Activated B cell treated with CpG ODN at 0.5 μM for 24 hours (primary cell): ENCODE measurements at regions of chr1 and their contacts with region 1.

Region 1: DNA sequence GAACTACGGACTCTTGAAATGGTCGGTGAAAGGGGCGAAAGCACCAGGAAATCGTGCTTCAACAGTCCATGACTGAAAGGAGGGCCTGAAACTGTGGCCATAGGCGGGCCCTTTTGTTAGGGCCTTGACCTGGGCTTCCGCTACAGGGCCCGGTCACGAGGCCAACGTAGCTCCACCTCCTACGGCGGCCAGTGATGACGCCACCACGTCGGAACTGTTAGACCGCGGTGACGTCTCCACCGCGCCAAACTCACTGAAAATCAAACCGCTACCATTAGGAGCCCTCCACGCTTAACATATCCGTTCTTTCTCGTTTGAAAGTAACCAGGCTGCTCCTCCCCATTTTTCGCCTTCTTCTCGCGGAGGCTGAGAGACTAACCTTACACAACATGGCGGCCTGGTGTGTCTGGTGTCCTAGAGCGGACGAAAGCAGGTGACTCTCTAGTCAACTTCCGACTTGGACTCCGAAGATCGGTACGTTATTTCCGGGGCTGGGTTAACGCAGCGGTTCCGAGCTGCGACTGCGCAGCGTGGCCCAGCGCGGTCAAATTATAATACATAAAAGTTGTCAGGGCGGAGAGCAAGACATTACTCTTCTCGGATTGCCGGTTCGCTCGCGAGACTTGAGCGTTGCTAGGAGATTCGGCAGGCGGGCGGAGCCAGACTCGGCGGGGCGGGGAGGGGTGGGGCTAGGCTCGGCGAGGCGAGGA is 376 bp upstream of the CACYBP start:
- DNase-seq: peak; percentile 88
- ATAC-seq: peak; percentile 78
- H3K4me3 Mint-ChIP-seq: no peak overlapping the region
- H3K27ac Mint-ChIP-seq: no peak overlapping the region
- H3K4me1 Mint-ChIP-seq: peaks cover 38% of the 10 kb centered on the region
- H3K27me3 Mint-ChIP-seq: no peaks in the 10 kb centered on the region
- CTCF ChIP-seq: no peak

Region 2: DNA sequence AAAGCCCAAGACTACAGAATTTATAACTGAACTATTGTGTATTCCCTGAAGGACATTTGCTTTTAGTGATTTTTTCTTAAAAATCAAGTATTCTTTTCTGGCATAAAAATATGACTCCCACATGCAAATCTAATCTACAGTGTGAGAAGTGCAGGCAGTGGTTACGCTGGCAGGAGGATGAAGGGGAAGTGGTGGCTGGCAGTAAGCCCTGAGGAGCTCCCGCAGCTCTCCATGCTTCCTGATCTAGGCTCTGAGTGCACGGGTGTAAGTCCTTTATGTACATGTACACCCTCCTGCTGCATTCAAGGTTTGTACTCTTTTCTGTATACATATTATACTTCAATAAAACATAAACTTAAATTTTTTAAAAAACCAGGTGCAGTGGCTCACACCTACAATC is 1589.8 kb before region 1 on chr1:
- CTCF ChIA-PET with region 1: no interaction called
- POLR2A ChIA-PET with region 1: interaction called, 3 read pairs
- intact Hi-C with region 1: loop called (anchors 10 kb)
- DNase-seq: no peak
- ATAC-seq: peak; percentile 25
- H3K4me3 Mint-ChIP-seq: peak overlapping the region; percentile 81
- H3K27ac Mint-ChIP-seq: peak overlapping the region; percentile 95
- H3K4me1 Mint-ChIP-seq: peaks cover 91% of the 10 kb centered on the region
- H3K27me3 Mint-ChIP-seq: no peaks in the 10 kb centered on the region
- CTCF ChIP-seq: no peak

Region 3: DNA sequence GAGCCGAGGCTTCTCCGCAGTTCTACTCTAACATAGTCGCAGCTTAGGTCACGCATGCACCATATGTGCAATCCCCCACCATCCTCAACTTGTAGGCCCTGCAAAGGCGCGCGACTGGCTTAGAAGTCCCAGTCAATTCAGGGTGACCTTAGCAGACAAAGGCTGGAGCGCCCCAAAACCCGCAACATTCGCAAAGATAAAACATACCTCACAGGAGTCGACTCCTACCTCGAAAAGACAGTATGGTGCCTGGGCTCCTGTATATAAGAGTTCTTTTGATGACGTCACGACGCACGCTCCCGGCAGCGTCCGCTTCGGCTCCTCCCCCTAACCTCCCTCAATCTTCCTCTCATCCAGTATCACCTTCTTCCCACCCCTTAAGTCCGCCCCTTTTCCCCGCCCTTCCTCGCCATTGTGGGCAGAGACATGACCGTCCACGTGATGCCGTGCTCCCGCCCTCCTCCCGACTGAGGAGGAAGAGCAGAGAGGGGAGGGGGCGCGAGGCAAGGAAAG is 1131.6 kb before region 1 on chr1 and contains the start of gene GAS5:
- CTCF ChIA-PET with region 1: no interaction called
- POLR2A ChIA-PET with region 1: interaction called, 17 read pairs
- intact Hi-C with region 1: loop called (anchors 1 kb)
- DNase-seq: peak; percentile 95
- ATAC-seq: peak; percentile 80
- H3K4me3 Mint-ChIP-seq: peak within 1 kb of the TSS; percentile 97
- H3K27ac Mint-ChIP-seq: peak within 1 kb of the TSS; percentile 97
- H3K4me1 Mint-ChIP-seq: peaks cover 79% of the 10 kb centered on the region
- H3K27me3 Mint-ChIP-seq: no peaks in the 10 kb centered on the region
- CTCF ChIP-seq: no peak
- total RNA-seq, gene GAS5: 701 and 722 TPM in 2 replicates

Region 4: DNA sequence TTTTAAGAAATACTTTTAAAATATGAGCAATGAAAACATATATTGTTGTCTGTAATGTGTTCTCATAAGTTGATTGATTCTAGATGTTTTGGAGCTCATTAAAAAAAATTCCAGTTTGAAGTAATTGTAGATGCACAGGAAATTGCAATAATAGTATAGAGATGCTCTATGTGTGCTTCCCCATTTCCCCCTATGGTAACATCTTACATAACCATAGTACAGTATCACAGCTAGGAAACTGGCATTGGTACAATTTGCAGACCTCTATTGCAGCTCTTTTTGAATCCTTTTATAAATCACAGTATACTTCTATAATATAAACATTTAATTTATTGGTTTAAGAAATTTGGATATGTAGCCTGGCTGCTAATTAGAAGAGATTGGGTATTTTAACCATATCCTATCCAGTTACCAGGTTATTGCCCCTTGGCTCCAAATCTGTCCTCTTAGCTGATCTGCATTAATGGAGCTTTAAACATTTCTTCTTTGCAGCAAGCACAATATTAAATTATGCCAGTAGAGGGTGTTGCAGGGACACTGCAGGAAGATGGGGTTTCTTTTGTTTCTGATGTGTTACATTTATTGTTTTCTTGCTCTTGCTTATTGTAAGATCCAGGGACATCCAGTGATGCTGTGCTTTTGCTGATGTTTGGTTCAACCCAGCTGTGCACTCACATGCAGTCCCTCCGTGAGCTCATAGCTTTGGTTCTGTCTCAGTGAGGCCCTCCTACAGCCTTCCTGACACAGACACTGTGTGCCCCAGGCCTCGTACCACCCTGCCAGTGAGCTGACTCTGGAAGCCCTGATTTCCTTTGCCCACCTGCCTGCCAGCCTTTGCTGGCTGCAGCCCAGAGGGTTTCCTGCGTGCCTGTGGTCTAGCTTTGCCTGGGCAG is 736.8 kb before region 1 on chr1:
- CTCF ChIA-PET with region 1: interaction called, 4 read pairs
- POLR2A ChIA-PET with region 1: interaction called, 9 read pairs
- intact Hi-C with region 1: loop called (anchors 1 kb)
- DNase-seq: no peak
- ATAC-seq: peak; percentile 70
- H3K4me3 Mint-ChIP-seq: no peak overlapping the region
- H3K27ac Mint-ChIP-seq: no peak overlapping the region
- H3K4me1 Mint-ChIP-seq: peaks cover 25% of the 10 kb centered on the region
- H3K27me3 Mint-ChIP-seq: no peaks in the 10 kb centered on the region
- CTCF ChIP-seq: no peak

Region 5: GRCh38 chr1:174800216-174800851 is 199.0 kb before region 1 on chr1:
- CTCF ChIA-PET with region 1: interaction called, 6 read pairs
- POLR2A ChIA-PET with region 1: interaction called, 61 read pairs
- intact Hi-C with region 1: loop called (anchors 1 kb)
- DNase-seq: no peak
- ATAC-seq: no peak
- H3K4me3 Mint-ChIP-seq: no peak overlapping the region
- H3K27ac Mint-ChIP-seq: no peak overlapping the region
- H3K4me1 Mint-ChIP-seq: peaks cover 11% of the 10 kb centered on the region
- H3K27me3 Mint-ChIP-seq: no peaks in the 10 kb centered on the region
- CTCF ChIP-seq: no peak

Region 6: GRCh38 chr1:174953285-174954072 is 45.9 kb before region 1 on chr1:
- CTCF ChIA-PET with region 1: no interaction called
- POLR2A ChIA-PET with region 1: interaction called, 15 read pairs
- intact Hi-C with region 1: no loop called
- DNase-seq: no peak
- ATAC-seq: peak; percentile 67
- H3K4me3 Mint-ChIP-seq: peak overlapping the region; percentile 70
- H3K27ac Mint-ChIP-seq: peak overlapping the region; percentile 79
- H3K4me1 Mint-ChIP-seq: peaks cover 51% of the 10 kb centered on the region
- H3K27me3 Mint-ChIP-seq: no peaks in the 10 kb centered on the region
- CTCF ChIP-seq: no peak

Region 7: GRCh38 chr1:175023043-175023921 is 23.9 kb after region 1 on chr1 and contains the start of gene MRPS14:
- CTCF ChIA-PET with region 1: interaction called, 5 read pairs
- POLR2A ChIA-PET with region 1: interaction called, 139 read pairs
- intact Hi-C with region 1: loop called (anchors 1 kb)
- DNase-seq: peak; percentile 91
- ATAC-seq: peak; percentile 93
- H3K4me3 Mint-ChIP-seq: peak within 1 kb of the TSS; percentile 95
- H3K27ac Mint-ChIP-seq: peak within 1 kb of the TSS; percentile 90
- H3K4me1 Mint-ChIP-seq: peaks cover 29% of the 10 kb centered on the region
- H3K27me3 Mint-ChIP-seq: no peaks in the 10 kb centered on the region
- CTCF ChIP-seq: no peak
- total RNA-seq, gene MRPS14: 36.5 and 36.9 TPM in 2 replicates